Transverse colon (tissue), 4 donors: ENCODE measurements at regions of chr2 and their contacts with region 1.

Region 1: GRCh38 chr2:162297925-162298552 is 20.4 kb downstream of the IFIH1 start:
- DNase-seq: peak; percentile 58
- H3K4me3 ChIP-seq: no peak overlapping the region
- H3K27ac ChIP-seq: no peak overlapping the region
- H3K4me1 ChIP-seq: no peaks in the 10 kb centered on the region
- H3K27me3 ChIP-seq: no peaks in the 10 kb centered on the region
- CTCF ChIP-seq: peak; percentile 78 to 86 (median 81)
- EP300 ChIP-seq: no peak
- POLR2A ChIP-seq: no peak

Region 2: DNA sequence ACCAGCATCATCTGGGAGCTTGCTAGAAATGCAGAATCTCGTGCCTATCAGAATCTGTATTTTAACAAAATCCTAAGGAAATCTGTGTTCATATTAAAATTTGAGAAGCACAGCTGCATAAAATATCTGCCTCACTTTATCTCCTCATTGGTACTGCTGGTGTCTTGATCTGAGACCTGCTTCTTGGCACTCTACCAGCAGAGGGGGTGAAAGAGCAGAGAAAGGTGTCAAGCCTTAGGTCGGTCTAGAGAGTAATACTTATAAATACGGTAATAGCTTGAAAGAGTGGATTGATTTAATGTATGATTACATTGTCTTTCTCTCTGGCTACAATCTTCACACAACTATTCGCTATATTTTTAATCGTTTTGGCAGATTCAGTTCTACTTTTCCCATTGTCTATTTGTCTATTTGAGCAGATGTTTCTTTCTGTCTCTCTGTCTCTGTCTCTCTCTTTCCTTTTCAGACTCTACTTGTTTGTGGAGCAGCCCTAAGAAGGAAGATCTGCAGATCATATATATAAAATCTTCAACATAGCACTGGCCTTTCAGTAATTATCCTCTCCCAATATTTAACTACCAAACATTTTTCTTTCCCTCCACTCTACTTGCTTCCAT is 144.3 kb before region 1 on chr2:
- in situ Hi-C with region 1: loop called in 3 of 4 experiments (anchors 5 kb)
- intact Hi-C with region 1: no loop called
- DNase-seq: peak; percentile 64
- H3K4me3 ChIP-seq: no peak overlapping the region
- H3K27ac ChIP-seq: no peak overlapping the region
- H3K4me1 ChIP-seq: no peaks in the 10 kb centered on the region
- H3K27me3 ChIP-seq: peaks cover 24% of the 10 kb centered on the region
- CTCF ChIP-seq: peak; percentile 44 to 63 (median 55)
- EP300 ChIP-seq: no peak
- POLR2A ChIP-seq: no peak

Region 3: GRCh38 chr2:162245781-162246180 is 52.3 kb before region 1 on chr2:
- in situ Hi-C with region 1: no loop called
- intact Hi-C with region 1: no loop called
- DNase-seq: no peak
- H3K4me3 ChIP-seq: no peak overlapping the region
- H3K27ac ChIP-seq: peak overlapping the region; percentile 41 to 65 (median 64)
- H3K4me1 ChIP-seq: peaks cover 0 to 16% (median 2%) of the 10 kb centered on the region in 4 donors
- H3K27me3 ChIP-seq: no peaks in the 10 kb centered on the region
- CTCF ChIP-seq: no peak
- EP300 ChIP-seq: no peak
- POLR2A ChIP-seq: no peak

Region 4: GRCh38 chr2:162370931-162371330 is 72.9 kb after region 1 on chr2:
- in situ Hi-C with region 1: no loop called
- intact Hi-C with region 1: no loop called
- DNase-seq: no peak
- H3K4me3 ChIP-seq: no peak overlapping the region
- H3K27ac ChIP-seq: no peak overlapping the region
- H3K4me1 ChIP-seq: no peaks in the 10 kb centered on the region
- H3K27me3 ChIP-seq: no peaks in the 10 kb centered on the region
- CTCF ChIP-seq: no peak
- EP300 ChIP-seq: no peak
- POLR2A ChIP-seq: no peak